Activated CD8-positive, alpha-beta T cell treated with anti-CD3 and anti-CD28 coated beads for 36 hours (primary cell): ENCODE measurements at regions of chr2 and their contacts with region 1.

Region 1: DNA sequence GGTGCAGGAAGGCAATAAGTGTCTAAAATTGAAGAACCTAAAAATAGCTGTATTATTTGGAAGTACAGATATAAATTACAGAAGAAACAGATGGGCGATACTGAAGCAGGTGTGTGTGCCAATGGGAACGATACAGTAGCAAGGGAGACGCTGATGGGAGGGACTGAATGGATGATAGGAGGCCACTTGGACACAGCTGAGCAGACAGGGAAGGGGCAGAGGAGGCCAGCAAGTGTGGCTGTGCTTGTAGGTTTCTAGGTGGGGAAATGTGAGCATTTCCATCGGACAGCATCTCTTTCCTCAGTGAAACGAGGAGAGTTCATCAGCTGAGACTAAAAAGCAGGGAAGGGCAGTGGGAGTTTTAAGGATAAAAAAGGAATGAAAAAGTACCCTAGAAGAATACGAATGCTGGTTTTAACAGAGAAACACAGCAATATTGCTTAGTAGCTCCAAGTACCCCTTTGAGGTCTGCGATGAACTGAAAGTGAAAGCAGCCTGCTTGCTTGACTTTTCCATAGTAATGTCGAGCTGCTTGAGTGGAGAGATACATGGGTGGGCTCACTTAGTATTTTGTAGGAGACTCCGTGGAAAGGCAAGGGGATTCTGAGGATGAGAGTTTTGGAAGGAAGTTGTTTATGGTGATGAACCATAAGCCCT is 91.7 kb upstream of the EPC2 start:
- DNase-seq: peak; percentile 51
- ATAC-seq: peak; percentile 86
- H3K4me3 Mint-ChIP-seq: no peak overlapping the region
- H3K27ac Mint-ChIP-seq: no peak overlapping the region
- H3K4me1 Mint-ChIP-seq: peaks cover 5% of the 10 kb centered on the region
- H3K27me3 Mint-ChIP-seq: no peaks in the 10 kb centered on the region
- CTCF ChIP-seq: no peak

Region 2: GRCh38 chr2:148430101-148430500 is 122.7 kb before region 1 on chr2:
- CTCF ChIA-PET with region 1: no interaction called
- POLR2A ChIA-PET with region 1: no interaction called
- intact Hi-C with region 1: no loop called
- DNase-seq: no peak
- ATAC-seq: no peak
- H3K4me3 Mint-ChIP-seq: no peak overlapping the region
- H3K27ac Mint-ChIP-seq: no peak overlapping the region
- H3K4me1 Mint-ChIP-seq: no peaks in the 10 kb centered on the region
- H3K27me3 Mint-ChIP-seq: no peaks in the 10 kb centered on the region
- CTCF ChIP-seq: no peak

Region 3: GRCh38 chr2:148874868-148875341 is 322.1 kb after region 1 on chr2 and contains the start of gene KIF5C:
- CTCF ChIA-PET with region 1: no interaction called
- POLR2A ChIA-PET with region 1: no interaction called
- intact Hi-C with region 1: loop called (anchors 10 kb)
- DNase-seq: peak; percentile 95
- ATAC-seq: peak; percentile 90
- H3K4me3 Mint-ChIP-seq: peak within 1 kb of the TSS; percentile 82
- H3K27ac Mint-ChIP-seq: peak within 1 kb of the TSS; percentile 66
- H3K4me1 Mint-ChIP-seq: peaks cover 10% of the 10 kb centered on the region
- H3K27me3 Mint-ChIP-seq: peaks cover 23% of the 10 kb centered on the region
- CTCF ChIP-seq: no peak
- total RNA-seq, gene KIF5C: 10.2 to 11.1 TPM